HCT116 (cell line): ENCODE measurements at regions of chr9 and their contacts with region 1.

Region 1: DNA sequence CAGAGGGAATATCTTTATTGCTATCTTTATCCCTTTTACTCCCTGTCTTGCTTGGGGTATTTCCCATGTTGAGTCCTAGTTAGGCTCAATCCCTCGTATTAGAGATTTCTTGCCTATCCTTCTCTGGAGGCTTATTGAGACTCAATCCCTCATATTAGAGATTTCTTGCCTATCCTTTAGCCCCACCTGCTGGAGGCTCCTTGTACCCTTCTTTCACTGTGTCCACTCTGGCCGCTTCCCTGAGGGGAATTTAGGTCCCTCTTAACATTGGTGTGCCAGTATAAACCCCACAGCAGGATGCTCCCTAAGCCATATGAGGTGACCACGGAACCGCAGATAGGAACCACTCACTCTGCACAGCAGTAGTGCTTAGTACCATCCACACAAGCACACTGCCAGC is 110.7 kb upstream of the MAMDC2 start:
- DNase-seq: peak; percentile 39
- ATAC-seq: peak; percentile 91
- H3K4me3 ChIP-seq: no peak overlapping the region
- H3K27ac ChIP-seq: no peak overlapping the region
- H3K4me1 ChIP-seq: no peaks in the 10 kb centered on the region
- H3K27me3 ChIP-seq: no peaks in the 10 kb centered on the region
- CTCF ChIP-seq: peak; percentile 51 to 70 (median 65)
- POLR2A ChIP-seq: no peak
- RAD21 ChIP-seq: peak; percentile 69

Region 2: GRCh38 chr9:69412741-69413150 is 520.2 kb before region 1 on chr9:
- CTCF ChIA-PET with region 1: interaction called, 3 read pairs
- POLR2A ChIA-PET with region 1: no interaction called
- RAD21 ChIA-PET with region 1: no interaction called
- intact Hi-C with region 1: loop called (anchors 2 kb)
- DNase-seq: peak; percentile 51
- ATAC-seq: peak; percentile 100
- H3K4me3 ChIP-seq: no peak overlapping the region
- H3K27ac ChIP-seq: no peak overlapping the region
- H3K4me1 ChIP-seq: peaks cover 0 to 3% of the 10 kb centered on the region in 2 experiments; a peak in 1 of 4 replicates
- H3K27me3 ChIP-seq: no peaks in the 10 kb centered on the region
- CTCF ChIP-seq: peak; percentile 56 to 78 (median 77); a peak in 5 of 6 replicates
- POLR2A ChIP-seq: no peak
- RAD21 ChIP-seq: peak; percentile 74

Region 3: GRCh38 chr9:69549310-69550202 is 383.3 kb before region 1 on chr9:
- CTCF ChIA-PET with region 1: no interaction called
- POLR2A ChIA-PET with region 1: no interaction called
- RAD21 ChIA-PET with region 1: no interaction called
- intact Hi-C with region 1: loop called (anchors 5 kb)
- DNase-seq: peak; percentile 38
- ATAC-seq: peak; percentile 58
- H3K4me3 ChIP-seq: no peak overlapping the region
- H3K27ac ChIP-seq: no peak overlapping the region
- H3K4me1 ChIP-seq: no peaks in the 10 kb centered on the region
- H3K27me3 ChIP-seq: peaks cover 37% of the 10 kb centered on the region; the same call in 1 of the 2 replicates
- CTCF ChIP-seq: peak; percentile 67 to 89 (median 83); a peak in 5 of 6 replicates
- POLR2A ChIP-seq: no peak
- RAD21 ChIP-seq: peak; percentile 76

Region 4: GRCh38 chr9:69672596-69673310 is 260.1 kb before region 1 on chr9:
- CTCF ChIA-PET with region 1: interaction called, 7 read pairs
- POLR2A ChIA-PET with region 1: no interaction called
- RAD21 ChIA-PET with region 1: interaction called in 1 of 2 experiments, 3 read pairs
- intact Hi-C with region 1: loop called (anchors 5 kb)
- DNase-seq: peak; percentile 77
- ATAC-seq: peak; percentile 93
- H3K4me3 ChIP-seq: peak overlapping the region; percentile 47 to 55
- H3K27ac ChIP-seq: peak overlapping the region; percentile 1; the same call in 1 of the 2 replicates
- H3K4me1 ChIP-seq: peaks cover 3 to 14% of the 10 kb centered on the region in 2 experiments; a peak in 3 of 4 replicates
- H3K27me3 ChIP-seq: peaks cover 6% of the 10 kb centered on the region; the same call in 1 of the 2 replicates
- CTCF ChIP-seq: peak; percentile 67 to 85 (median 76)
- POLR2A ChIP-seq: no peak
- RAD21 ChIP-seq: peak; percentile 63

Region 5: GRCh38 chr9:69809304-69809863 is 123.5 kb before region 1 on chr9:
- CTCF ChIA-PET with region 1: interaction called, 7 read pairs
- POLR2A ChIA-PET with region 1: no interaction called
- RAD21 ChIA-PET with region 1: no interaction called
- intact Hi-C with region 1: loop called (anchors 5 kb)
- DNase-seq: peak; percentile 7
- ATAC-seq: peak; percentile 78
- H3K4me3 ChIP-seq: no peak overlapping the region
- H3K27ac ChIP-seq: no peak overlapping the region
- H3K4me1 ChIP-seq: no peaks in the 10 kb centered on the region
- H3K27me3 ChIP-seq: no peaks in the 10 kb centered on the region
- CTCF ChIP-seq: peak; percentile 41 to 63 (median 42); a peak in 5 of 6 replicates
- POLR2A ChIP-seq: no peak
- RAD21 ChIP-seq: peak; percentile 42

Region 6: GRCh38 chr9:69919461-69920061 is 13.3 kb before region 1 on chr9:
- CTCF ChIA-PET with region 1: interaction called, 11 read pairs
- POLR2A ChIA-PET with region 1: no interaction called
- RAD21 ChIA-PET with region 1: no interaction called
- intact Hi-C with region 1: no loop called
- DNase-seq: peak; percentile 29
- ATAC-seq: peak; percentile 89
- H3K4me3 ChIP-seq: no peak overlapping the region
- H3K27ac ChIP-seq: no peak overlapping the region
- H3K4me1 ChIP-seq: no peaks in the 10 kb centered on the region
- H3K27me3 ChIP-seq: peaks cover 20% of the 10 kb centered on the region
- CTCF ChIP-seq: peak; percentile 60 to 72 (median 63); a peak in 5 of 6 replicates
- POLR2A ChIP-seq: no peak
- RAD21 ChIP-seq: peak; percentile 73

Region 7: DNA sequence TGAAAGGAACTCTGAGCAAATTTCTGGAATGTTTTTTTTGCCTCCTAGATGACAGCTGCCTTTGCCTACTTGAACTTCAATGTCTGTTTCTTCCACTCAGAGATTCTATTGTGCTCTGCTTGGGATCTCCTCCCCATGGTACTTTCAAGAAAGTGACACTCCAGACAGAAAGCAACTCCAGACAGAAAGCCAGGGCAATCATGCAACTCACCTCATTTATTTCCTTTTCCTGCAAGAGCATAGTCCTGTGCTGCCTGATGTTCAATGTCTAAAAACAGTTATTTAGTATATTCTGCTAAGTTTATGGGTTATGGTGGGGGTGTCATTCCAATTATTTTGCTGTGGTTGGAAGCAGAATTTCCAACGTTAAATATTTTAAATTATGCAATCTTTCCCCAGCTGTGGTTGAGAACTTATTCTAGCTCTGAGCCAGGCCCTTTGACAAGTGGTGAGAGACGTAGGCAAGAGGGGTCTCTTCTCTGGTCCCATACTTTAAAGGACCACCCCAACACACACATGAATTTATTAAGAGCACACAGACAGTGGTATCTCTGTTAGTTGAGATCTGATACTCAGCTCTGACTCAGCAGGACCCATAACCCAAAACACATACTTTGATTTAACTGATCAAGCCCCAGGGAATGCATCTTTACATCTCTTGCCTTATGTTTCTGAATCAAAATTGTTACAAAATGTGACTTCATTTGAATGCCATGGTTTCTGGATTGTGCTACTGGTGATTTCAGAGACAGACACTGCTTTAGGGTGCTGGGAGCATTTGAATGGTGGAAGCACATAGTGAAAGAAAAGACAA is 71.2 kb after region 1 on chr9:
- CTCF ChIA-PET with region 1: no interaction called
- POLR2A ChIA-PET with region 1: no interaction called
- RAD21 ChIA-PET with region 1: no interaction called
- intact Hi-C with region 1: no loop called
- DNase-seq: no peak
- ATAC-seq: no peak
- H3K4me3 ChIP-seq: no peak overlapping the region
- H3K27ac ChIP-seq: no peak overlapping the region
- H3K4me1 ChIP-seq: no peaks in the 10 kb centered on the region
- H3K27me3 ChIP-seq: no peaks in the 10 kb centered on the region
- CTCF ChIP-seq: no peak
- POLR2A ChIP-seq: no peak
- RAD21 ChIP-seq: no peak

Region 8: GRCh38 chr9:70111042-70111602 is 178.2 kb after region 1 on chr9:
- CTCF ChIA-PET with region 1: interaction called, 11 read pairs
- POLR2A ChIA-PET with region 1: no interaction called
- RAD21 ChIA-PET with region 1: interaction called in 1 of 2 experiments, 4 read pairs
- intact Hi-C with region 1: no loop called
- DNase-seq: peak; percentile 66
- ATAC-seq: peak; percentile 82
- H3K4me3 ChIP-seq: no peak overlapping the region
- H3K27ac ChIP-seq: no peak overlapping the region
- H3K4me1 ChIP-seq: peaks cover 4 to 32% of the 10 kb centered on the region in 2 experiments; a peak in 3 of 4 replicates
- H3K27me3 ChIP-seq: no peaks in the 10 kb centered on the region
- CTCF ChIP-seq: peak; percentile 85 to 94 (median 93)
- POLR2A ChIP-seq: no peak
- RAD21 ChIP-seq: peak; percentile 88